Endothelial cell of umbilical vein (primary cell): ENCODE measurements at regions of chr4 and their contacts with region 1.

Region 1: GRCh38 chr4:118352843-118353533 is at the start of gene PRSS12:
- DNase-seq: peak; percentile 44
- H3K4me3 ChIP-seq: peak within 1 kb of the TSS in 1 of 3 experiments; percentile 36
- H3K27ac ChIP-seq: no peak within 1 kb of the TSS
- H3K4me1 ChIP-seq: peaks cover 11% of the 10 kb centered on the region
- H3K27me3 ChIP-seq: peaks cover 30 to 60% of the 10 kb centered on the region in 2 experiments
- CTCF ChIP-seq: peak; percentile 84
- POLR2A ChIP-seq: no peak
- total RNA-seq, gene PRSS12: 0.23 and 0.55 TPM in 2 replicates

Region 2: GRCh38 chr4:118296729-118297128 is 56.3 kb before region 1 on chr4:
- CTCF ChIA-PET with region 1: no interaction called
- POLR2A ChIA-PET with region 1: no interaction called
- dilution Hi-C with region 1: no loop called
- intact Hi-C with region 1: no loop called
- DNase-seq: no peak
- H3K4me3 ChIP-seq: no peak overlapping the region
- H3K27ac ChIP-seq: no peak overlapping the region
- H3K4me1 ChIP-seq: no peaks in the 10 kb centered on the region
- H3K27me3 ChIP-seq: no peaks in the 10 kb centered on the region
- CTCF ChIP-seq: no peak
- POLR2A ChIP-seq: no peak

Region 3: GRCh38 chr4:118363166-118363565 is 10.2 kb after region 1 on chr4:
- CTCF ChIA-PET with region 1: interaction called, 22 read pairs
- POLR2A ChIA-PET with region 1: no interaction called
- dilution Hi-C with region 1: no loop called
- intact Hi-C with region 1: no loop called
- DNase-seq: no peak
- H3K4me3 ChIP-seq: no peak overlapping the region
- H3K27ac ChIP-seq: no peak overlapping the region
- H3K4me1 ChIP-seq: no peaks in the 10 kb centered on the region
- H3K27me3 ChIP-seq: peaks cover 5 to 15% of the 10 kb centered on the region in 2 experiments
- CTCF ChIP-seq: no peak
- POLR2A ChIP-seq: no peak